ENCODE measurements at regions of chr18 and their contacts with region 1.

Region 1: DNA sequence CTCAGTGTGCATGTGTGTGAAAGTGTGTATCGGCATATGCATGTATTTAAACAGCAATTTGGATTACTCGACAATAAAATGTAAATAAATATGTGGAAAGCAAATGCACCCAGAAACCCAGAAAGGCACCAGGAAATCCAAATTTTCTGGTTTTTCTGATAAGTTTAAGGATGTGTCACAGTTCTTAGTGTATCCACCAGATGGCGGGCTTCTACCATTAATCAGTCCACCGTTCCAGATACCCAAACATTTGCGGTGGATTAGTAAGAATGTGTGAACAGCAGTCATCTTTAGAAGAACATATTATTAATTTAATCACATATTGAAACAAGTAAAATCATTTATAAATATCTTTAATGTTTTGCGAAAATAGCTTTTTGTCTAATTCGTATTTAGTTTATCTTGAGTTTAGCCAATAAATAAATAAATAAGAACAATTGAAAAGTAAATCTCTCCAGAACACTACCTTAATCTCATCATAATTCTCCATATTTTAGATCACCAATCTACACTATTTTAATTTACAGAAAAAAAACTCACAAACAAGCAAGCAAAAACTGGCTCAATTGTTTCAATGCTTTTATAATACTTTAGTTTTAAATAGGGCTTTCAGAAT is 298.9 kb downstream of the DSEL start:
- DNase-seq: peak; percentile 78
- ATAC-seq: peak; percentile 95
- H3K4me3 ChIP-seq: no peak overlapping the region
- H3K27ac ChIP-seq: no peak overlapping the region
- H3K4me1 ChIP-seq: no peaks in the 10 kb centered on the region
- H3K27me3 ChIP-seq: no peaks in the 10 kb centered on the region
- CTCF ChIP-seq: peak; percentile 86
- POLR2A ChIP-seq: 0 out of 2 replicates have a peak, but pooled peaks have one; percentile 32
- RAD21 ChIP-seq: peak; percentile 94

Region 2: DNA sequence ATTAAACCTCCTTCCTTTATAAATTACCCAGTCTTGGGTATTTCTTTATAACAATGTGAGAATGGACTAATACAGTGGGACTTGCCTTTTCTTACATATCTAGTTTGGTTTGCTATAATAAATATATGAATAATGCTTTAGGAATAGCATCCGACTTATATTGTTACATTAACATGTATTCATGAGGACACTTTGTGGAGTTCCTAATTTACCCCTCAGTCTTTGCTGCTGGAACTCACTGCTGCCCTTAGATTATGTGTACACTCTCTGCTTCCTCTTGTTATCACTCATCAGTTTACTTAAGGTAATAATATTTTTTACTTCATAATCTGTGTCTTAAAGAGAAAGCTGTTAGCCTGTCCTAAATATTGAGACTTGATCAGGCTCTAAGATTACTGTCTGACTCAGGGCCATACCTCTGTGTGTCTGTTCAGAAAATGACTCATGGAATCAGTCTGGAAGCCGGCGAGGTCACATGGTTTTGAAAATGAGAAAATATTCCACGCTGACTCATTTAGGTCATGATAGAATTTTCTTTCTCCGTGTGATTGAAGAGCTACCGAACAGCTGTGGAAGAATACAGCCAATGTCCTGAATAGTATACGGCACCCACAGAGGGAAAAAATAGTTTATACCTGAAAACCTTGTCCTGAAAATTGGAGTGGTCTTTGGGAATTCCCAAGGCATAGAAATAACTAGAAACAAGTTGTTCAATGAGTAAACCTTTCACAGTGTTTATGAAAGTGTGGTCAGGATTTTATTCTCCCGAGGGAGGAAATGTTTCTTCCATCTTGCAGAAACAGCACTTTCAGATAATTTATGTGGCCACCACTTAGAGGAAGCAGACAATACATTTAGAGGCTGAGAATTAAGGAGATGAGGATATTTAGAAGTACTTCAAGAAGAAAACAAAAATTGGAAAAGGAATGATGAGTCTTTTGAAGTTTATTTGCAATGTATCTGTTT is 142.5 kb after region 1 on chr18:
- CTCF ChIA-PET with region 1: no interaction called
- POLR2A ChIA-PET with region 1: no interaction called
- dilution Hi-C with region 1: no loop called
- in situ Hi-C with region 1: no loop called
- intact Hi-C with region 1: loop called (anchors 5 kb)
- DNase-seq: peak; percentile 96
- ATAC-seq: peak; percentile 97
- H3K4me3 ChIP-seq: peak overlapping the region; percentile 37; the same call in 1 of the 2 replicates
- H3K27ac ChIP-seq: no peak overlapping the region
- H3K4me1 ChIP-seq: peaks cover 3% of the 10 kb centered on the region; the same call in 1 of the 2 replicates
- H3K27me3 ChIP-seq: no peaks in the 10 kb centered on the region
- CTCF ChIP-seq: no peak
- POLR2A ChIP-seq: no peak
- RAD21 ChIP-seq: no peak; the same call in 1 of the 2 replicates

Region 3: DNA sequence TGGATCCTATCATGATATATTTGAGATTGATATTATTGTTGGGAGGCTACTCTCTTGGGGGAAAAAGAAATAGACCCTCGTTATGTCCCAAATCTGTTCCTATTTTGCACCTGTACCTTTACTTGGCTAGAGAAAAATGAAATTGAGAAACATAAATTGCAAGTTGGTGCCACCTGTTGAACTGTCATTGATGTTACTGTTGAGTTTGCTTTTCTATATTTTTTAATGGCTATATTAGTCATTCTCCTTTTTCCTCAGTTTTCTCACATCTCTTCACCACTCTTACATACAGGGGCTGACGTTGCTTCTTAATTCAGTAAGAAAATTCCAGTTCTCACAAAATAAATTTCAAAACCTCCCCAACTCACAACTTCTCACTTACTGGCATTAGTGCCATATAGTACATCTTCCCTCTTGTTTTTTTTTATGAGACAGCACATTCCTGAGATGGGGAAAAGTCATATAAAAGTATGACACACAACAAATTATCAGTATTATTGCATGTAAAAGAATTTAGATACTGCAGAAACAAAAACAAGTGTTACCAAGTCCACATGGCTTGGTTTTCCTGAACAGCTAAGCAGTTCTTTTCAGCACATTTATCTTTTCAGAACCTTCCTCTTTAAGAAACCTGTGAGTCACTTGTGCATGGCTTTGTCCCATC is 647.1 kb after region 1 on chr18:
- CTCF ChIA-PET with region 1: no interaction called
- POLR2A ChIA-PET with region 1: no interaction called
- dilution Hi-C with region 1: no loop called
- in situ Hi-C with region 1: no loop called
- intact Hi-C with region 1: loop called (anchors 10 kb)
- DNase-seq: peak; percentile 58
- ATAC-seq: peak; percentile 41
- H3K4me3 ChIP-seq: no peak overlapping the region
- H3K27ac ChIP-seq: no peak overlapping the region
- H3K4me1 ChIP-seq: peaks cover 2% of the 10 kb centered on the region; the same call in 1 of the 2 replicates
- H3K27me3 ChIP-seq: no peaks in the 10 kb centered on the region
- CTCF ChIP-seq: no peak
- POLR2A ChIP-seq: no peak
- RAD21 ChIP-seq: no peak

Region 4: DNA sequence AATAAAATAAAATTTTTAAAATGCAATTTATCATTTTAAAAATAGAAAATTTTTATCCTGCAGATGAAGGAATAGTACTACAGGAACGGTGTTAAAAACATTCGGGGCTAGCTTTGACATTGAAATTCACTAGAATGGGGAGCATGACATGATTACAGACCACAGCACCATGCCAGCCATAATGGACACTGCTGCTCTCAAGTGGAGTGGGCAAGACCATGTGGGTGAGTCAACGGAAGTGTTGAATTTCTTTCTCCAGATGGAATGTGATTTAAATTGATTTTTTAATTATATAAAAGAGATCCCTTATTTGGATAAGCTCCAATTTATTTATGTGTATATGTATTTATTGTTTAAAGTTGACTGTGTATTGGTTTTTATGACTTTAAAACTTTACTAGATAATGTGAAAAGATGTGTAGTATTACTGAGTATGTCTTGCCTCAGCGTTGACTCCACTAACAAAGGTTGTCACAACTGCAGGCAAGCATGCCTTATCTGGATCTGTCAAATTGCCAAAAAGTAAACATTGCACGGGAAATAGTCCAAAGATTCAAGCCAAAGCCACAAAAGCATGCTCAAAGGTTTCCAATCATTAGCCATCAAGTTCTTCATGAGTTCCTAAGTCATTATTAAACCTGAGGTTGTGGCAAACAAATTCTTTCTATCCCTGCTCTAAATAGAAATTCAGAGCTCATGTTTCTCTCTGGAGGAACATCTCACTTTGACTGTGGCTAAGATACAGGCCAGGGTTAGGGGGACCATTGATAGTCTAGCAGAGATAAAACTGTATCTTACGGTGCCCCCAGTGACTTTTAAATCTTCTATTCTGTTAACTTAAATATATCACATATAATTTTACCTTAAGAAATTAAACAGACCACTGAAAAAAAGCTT is 960.4 kb after region 1 on chr18:
- CTCF ChIA-PET with region 1: no interaction called
- POLR2A ChIA-PET with region 1: no interaction called
- dilution Hi-C with region 1: no loop called
- in situ Hi-C with region 1: no loop called
- intact Hi-C with region 1: loop called (anchors 10 kb)
- DNase-seq: peak; percentile 99
- ATAC-seq: peak; percentile 96
- H3K4me3 ChIP-seq: no peak overlapping the region
- H3K27ac ChIP-seq: peak overlapping the region; percentile 91; the same call in 1 of the 2 replicates
- H3K4me1 ChIP-seq: peaks cover 6% of the 10 kb centered on the region; the same call in 1 of the 2 replicates
- H3K27me3 ChIP-seq: no peaks in the 10 kb centered on the region
- CTCF ChIP-seq: no peak
- POLR2A ChIP-seq: no peak
- RAD21 ChIP-seq: peak; percentile 9; the same call in 1 of the 2 replicates

Region 5: GRCh38 chr18:68660354-68661183 is 1442.9 kb after region 1 on chr18:
- CTCF ChIA-PET with region 1: no interaction called
- POLR2A ChIA-PET with region 1: no interaction called
- dilution Hi-C with region 1: no loop called
- in situ Hi-C with region 1: loop called (anchors 5 kb)
- intact Hi-C with region 1: loop called (anchors 1 kb)
- DNase-seq: peak; percentile 61
- ATAC-seq: peak; percentile 81
- H3K4me3 ChIP-seq: no peak overlapping the region
- H3K27ac ChIP-seq: no peak overlapping the region
- H3K4me1 ChIP-seq: no peaks in the 10 kb centered on the region
- H3K27me3 ChIP-seq: no peaks in the 10 kb centered on the region
- CTCF ChIP-seq: peak; percentile 68
- POLR2A ChIP-seq: no peak
- RAD21 ChIP-seq: peak; percentile 73

Measured in IMR-90 (cell line).